Spleen (tissue), 13 donors: ENCODE measurements at regions of chr19 and their contacts with region 1.

Region 1: GRCh38 chr19:5679289-5680082 is 830 bp downstream of the MICOS13 start:
- DNase-seq: peak; percentile 90
- H3K4me3 ChIP-seq: peak overlapping the region; percentile 54 to 97 (median 88)
- H3K27ac ChIP-seq: peak overlapping the region; percentile 84 to 94 (median 94)
- H3K4me1 ChIP-seq: peaks cover 12 to 33% (median 21%) of the 10 kb centered on the region in 6 donors
- H3K27me3 ChIP-seq: no peaks in the 10 kb centered on the region
- CTCF ChIP-seq: no peak
- POLR2A ChIP-seq: no peak

Region 2: DNA sequence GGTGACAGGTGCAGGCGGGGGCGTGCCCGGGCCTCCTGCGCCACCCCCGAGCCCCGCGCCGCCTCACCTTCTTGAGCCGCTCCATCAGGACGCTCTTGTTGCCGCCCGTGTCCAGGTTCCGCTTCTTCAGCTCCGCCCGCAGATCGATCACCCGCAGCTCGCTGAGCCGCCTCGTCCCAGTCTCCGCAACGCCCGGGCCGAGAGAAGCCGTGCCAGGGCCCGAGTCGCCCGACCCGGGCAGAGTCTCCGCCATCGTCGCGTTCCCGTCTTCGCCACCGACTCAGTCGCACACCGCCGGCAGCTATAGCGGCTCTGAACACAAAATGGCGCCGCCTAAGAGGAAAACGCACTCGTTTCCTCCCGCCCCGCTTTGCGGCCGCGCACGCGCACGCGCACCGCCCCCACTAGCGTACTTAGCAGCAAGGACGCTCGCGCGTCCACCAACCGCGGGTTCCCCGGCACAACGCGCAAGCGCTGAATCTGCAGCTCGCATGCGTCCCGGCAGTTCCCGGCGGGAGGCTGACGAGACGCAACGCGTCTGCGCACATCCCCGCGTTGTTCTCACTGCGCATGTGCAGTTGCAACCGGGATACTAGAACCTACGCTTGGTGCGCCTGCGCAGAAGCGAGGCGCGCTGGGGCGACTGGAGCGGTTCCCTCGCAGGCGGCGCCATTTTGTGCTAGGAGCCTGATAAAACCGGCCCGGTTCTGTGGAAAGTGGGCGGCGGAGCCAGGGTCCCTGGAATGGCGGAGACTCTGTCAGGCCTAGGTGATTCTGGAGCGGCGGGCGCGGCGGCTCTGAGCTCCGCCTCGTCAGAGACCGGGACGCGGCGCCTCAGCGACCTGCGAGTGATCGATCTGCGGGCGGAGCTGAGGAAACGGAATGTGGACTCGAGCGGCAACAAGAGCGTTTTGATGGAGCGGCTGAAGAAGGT is 56.8 kb before region 1 on chr19 and contains the starts of genes SAFB and SAFB2:
- intact Hi-C with region 1: loop called (anchors 10 kb)
- DNase-seq: peak; percentile 100
- H3K4me3 ChIP-seq: peak within 1 kb of the TSS; percentile 85 to 99 (median 92)
- H3K27ac ChIP-seq: peak within 1 kb of the TSS; percentile 82 to 99 (median 96)
- H3K4me1 ChIP-seq: peaks cover 66 to 86% (median 79%) of the 10 kb centered on the region in 6 donors
- H3K27me3 ChIP-seq: no peaks in the 10 kb centered on the region
- CTCF ChIP-seq: peak in 5 of 11 experiments; percentile 6 to 50 (median 21)
- POLR2A ChIP-seq: peak; percentile 75 to 90 (median 75)
- total RNA-seq, gene SAFB: 94.5 to 161 (median 112) TPM
- total RNA-seq, gene SAFB2: 73.4 to 146 (median 117) TPM